ENCODE measurements at regions of chr5 and their contacts with region 1.

Region 1: GRCh38 chr5:181217111-181217802 is 5.8 kb upstream of the TRIM41 start:
- DNase-seq: peak; percentile 85
- H3K4me3 Mint-ChIP-seq: peak overlapping the region; percentile 89
- H3K27ac Mint-ChIP-seq: peak overlapping the region; percentile 91
- H3K4me1 Mint-ChIP-seq: peaks cover 40% of the 10 kb centered on the region
- H3K27me3 Mint-ChIP-seq: peaks cover 10% of the 10 kb centered on the region

Region 2: DNA sequence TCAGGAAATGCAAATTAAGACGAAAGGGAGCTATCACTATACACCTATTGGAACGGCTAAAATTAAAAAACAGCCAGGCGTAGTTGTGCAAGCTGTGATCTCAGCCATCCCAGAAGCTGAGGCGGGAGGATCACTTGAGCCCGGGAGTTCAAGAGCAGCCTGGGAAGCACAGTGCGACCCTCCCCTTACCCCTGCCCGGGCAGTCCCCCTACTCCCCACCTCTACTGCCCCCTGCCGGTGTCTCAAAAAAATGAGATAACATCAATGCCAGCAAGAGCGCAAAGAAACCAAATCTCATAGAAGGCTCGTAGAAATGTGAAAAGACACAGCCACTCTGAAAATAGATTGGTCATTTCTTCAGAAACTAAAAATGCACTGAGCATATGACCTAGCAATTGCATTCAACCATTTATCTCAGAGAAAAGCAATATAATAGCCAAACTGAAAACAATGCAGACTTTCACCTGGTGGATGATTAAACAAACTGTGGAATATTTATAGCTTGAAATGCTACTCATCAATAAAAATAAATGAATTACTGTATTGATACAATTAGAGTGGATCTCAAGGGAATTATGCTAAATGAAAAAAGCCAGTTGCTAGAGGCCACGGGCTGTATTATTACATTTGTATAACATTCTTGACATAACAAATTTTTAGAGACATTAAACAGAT is 49.3 kb before region 1 on chr5:
- intact Hi-C with region 1: loop called (anchors 2 kb)
- DNase-seq: peak; percentile 78
- H3K4me3 Mint-ChIP-seq: no peak overlapping the region
- H3K27ac Mint-ChIP-seq: no peak overlapping the region
- H3K4me1 Mint-ChIP-seq: peaks cover 59% of the 10 kb centered on the region
- H3K27me3 Mint-ChIP-seq: peaks cover 55% of the 10 kb centered on the region

Measured in activated CD4-positive, alpha-beta T cell treated with anti-CD3 and anti-CD28 coated beads, Interleukin-2, amount 10 ng/mL, durations not matched to agents 24 days and 14 days (primary cell).